ENCODE measurements at regions of chr12 and their contacts with region 1.

Region 1: DNA sequence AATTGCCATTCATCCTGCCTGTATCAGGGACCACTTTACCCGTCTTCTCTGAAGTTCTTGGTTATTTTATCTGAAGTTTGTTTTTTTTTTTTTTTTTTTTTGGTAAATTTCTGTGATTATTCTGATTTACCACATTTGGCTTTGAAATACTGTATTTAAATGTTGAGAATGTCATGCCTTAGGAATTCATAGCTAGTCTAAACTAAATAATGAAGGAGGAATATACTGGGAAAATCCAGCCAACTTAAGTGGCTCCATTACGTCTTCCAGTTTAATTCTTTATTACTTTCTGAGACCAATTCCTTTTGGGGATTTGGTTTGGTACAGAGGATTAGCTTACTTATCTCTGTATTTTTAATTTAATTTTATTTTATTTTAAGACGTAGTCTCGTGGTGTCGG is 60.3 kb upstream of the KCNMB4 start:
- DNase-seq: no peak
- ATAC-seq: no peak
- H3K4me3 ChIP-seq: no peak overlapping the region
- H3K4me3 Mint-ChIP-seq: peak overlapping the region in 1 of 10 donors; percentile 75
- H3K27ac ChIP-seq: no peak overlapping the region
- H3K27ac Mint-ChIP-seq: peak overlapping the region in 2 of 9 donors; percentile 22 to 26
- H3K4me1 ChIP-seq: peaks cover 12 to 13% of the 10 kb centered on the region in 2 donors
- H3K4me1 Mint-ChIP-seq: peaks cover 32 to 68% (median 54%) of the 10 kb centered on the region in 7 donors
- H3K27me3 ChIP-seq: no peaks in the 10 kb centered on the region
- H3K27me3 Mint-ChIP-seq: no peaks in the 10 kb centered on the region

Region 2: GRCh38 chr12:70292017-70292776 is 13.6 kb before region 1 on chr12:
- CTCF ChIA-PET with region 1: no interaction called
- POLR2A ChIA-PET with region 1: no interaction called
- intact Hi-C with region 1: loop called in 1 of 2 experiments (anchors 2 kb)
- DNase-seq: no peak
- ATAC-seq: no peak
- H3K4me3 ChIP-seq: no peak overlapping the region
- H3K4me3 Mint-ChIP-seq: peak overlapping the region in 2 of 10 donors; percentile 4 to 27
- H3K27ac ChIP-seq: no peak overlapping the region
- H3K27ac Mint-ChIP-seq: peak overlapping the region in 3 of 9 donors; percentile 12 to 61 (median 14)
- H3K4me1 ChIP-seq: no peaks in the 10 kb centered on the region
- H3K4me1 Mint-ChIP-seq: peaks cover 23 to 70% (median 63%) of the 10 kb centered on the region in 7 donors
- H3K27me3 ChIP-seq: no peaks in the 10 kb centered on the region
- H3K27me3 Mint-ChIP-seq: no peaks in the 10 kb centered on the region

Region 3: GRCh38 chr12:70330159-70330558 is 24.4 kb after region 1 on chr12:
- CTCF ChIA-PET with region 1: no interaction called
- POLR2A ChIA-PET with region 1: no interaction called
- intact Hi-C with region 1: loop called in 1 of 2 experiments (anchors 2 kb)
- DNase-seq: no peak
- ATAC-seq: no peak
- H3K4me3 ChIP-seq: no peak overlapping the region
- H3K4me3 Mint-ChIP-seq: no peak overlapping the region
- H3K27ac ChIP-seq: no peak overlapping the region
- H3K27ac Mint-ChIP-seq: no peak overlapping the region
- H3K4me1 ChIP-seq: no peaks in the 10 kb centered on the region
- H3K4me1 Mint-ChIP-seq: peaks cover 3 to 61% (median 54%) of the 10 kb centered on the region in 7 donors
- H3K27me3 ChIP-seq: no peaks in the 10 kb centered on the region
- H3K27me3 Mint-ChIP-seq: no peaks in the 10 kb centered on the region

Region 4: DNA sequence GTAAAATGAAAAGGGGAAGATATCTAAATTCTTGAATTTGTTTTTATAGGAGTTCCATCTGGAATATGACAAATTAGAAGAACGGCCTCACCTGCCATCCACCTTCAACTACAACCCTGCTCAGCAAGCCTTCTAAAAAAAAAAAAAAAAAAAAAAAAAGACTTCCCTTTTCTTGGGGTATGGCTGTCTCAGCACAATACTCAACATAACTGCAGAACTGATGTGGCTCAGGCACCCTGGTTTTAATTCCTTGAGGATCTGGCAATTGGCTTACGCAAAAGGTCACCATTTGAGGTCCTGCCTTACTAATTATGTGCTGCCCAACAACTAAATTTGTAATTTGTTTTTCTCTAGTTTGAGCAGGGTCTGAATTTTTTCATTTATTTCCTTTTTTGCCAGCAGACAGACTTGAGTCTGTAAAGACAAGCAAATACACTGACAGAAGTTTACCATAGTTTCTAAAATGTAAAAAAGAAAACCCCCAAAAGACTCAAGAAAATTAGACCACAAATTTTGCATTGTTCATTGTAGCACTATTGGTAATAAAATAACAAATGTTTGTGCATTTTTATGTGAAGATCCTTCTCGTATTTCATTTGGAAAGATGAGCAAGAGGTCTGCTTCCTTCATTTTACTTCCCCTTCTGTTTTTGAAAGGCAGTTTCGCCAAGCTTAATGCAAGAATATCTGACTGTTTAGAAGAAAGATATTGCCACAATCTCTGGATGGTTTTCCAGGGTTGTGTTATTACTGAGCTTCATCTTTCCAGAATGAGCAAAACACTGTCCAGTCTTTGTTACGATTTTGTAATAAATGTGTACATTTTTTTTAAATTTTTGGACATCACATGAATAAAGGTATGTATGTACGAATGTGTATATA is 48.2 kb after region 1 on chr12:
- CTCF ChIA-PET with region 1: no interaction called
- POLR2A ChIA-PET with region 1: no interaction called
- intact Hi-C with region 1: loop called in 1 of 2 experiments (anchors 5 kb)
- DNase-seq: no peak
- ATAC-seq: peak; percentile 29
- H3K4me3 ChIP-seq: no peak overlapping the region
- H3K4me3 Mint-ChIP-seq: peak overlapping the region in 1 of 10 donors; percentile 32
- H3K27ac ChIP-seq: no peak overlapping the region
- H3K27ac Mint-ChIP-seq: peak overlapping the region in 3 of 9 donors; percentile 52 to 67 (median 63)
- H3K4me1 ChIP-seq: no peaks in the 10 kb centered on the region
- H3K4me1 Mint-ChIP-seq: peaks cover 0 to 21% (median 14%) of the 10 kb centered on the region in 7 donors
- H3K27me3 ChIP-seq: no peaks in the 10 kb centered on the region
- H3K27me3 Mint-ChIP-seq: no peaks in the 10 kb centered on the region

Region 5: DNA sequence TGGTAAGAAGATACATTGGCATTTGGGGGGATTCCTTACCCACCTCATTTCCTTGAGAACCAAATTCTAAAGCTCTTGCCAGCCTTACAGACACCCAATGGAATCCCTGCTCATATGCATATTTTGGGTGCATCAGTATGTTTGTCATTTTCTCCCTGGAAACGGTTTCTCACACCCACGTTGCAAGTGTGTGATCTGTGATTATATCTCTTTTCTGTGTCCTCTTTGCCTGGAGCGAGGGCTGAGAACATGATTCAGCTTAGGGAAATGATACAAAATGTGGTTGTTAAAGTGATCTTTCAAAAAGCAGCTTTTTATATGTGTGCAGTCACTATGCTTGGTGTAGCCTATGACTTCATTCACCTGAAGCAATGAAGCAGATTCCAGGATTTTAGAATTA is 112.3 kb after region 1 on chr12:
- CTCF ChIA-PET with region 1: no interaction called
- POLR2A ChIA-PET with region 1: no interaction called
- intact Hi-C with region 1: no loop called
- DNase-seq: no peak
- ATAC-seq: no peak
- H3K4me3 ChIP-seq: no peak overlapping the region
- H3K4me3 Mint-ChIP-seq: no peak overlapping the region
- H3K27ac ChIP-seq: no peak overlapping the region
- H3K27ac Mint-ChIP-seq: no peak overlapping the region
- H3K4me1 ChIP-seq: no peaks in the 10 kb centered on the region
- H3K4me1 Mint-ChIP-seq: peaks cover 0 to 10% (median 4%) of the 10 kb centered on the region in 7 donors
- H3K27me3 ChIP-seq: no peaks in the 10 kb centered on the region
- H3K27me3 Mint-ChIP-seq: peaks cover 0 to 5% (median 0%) of the 10 kb centered on the region in 5 donors